Head of caudate nucleus (tissue), 42 donors: ENCODE measurements at regions of chr14 and their contacts with region 1.

Region 1: DNA sequence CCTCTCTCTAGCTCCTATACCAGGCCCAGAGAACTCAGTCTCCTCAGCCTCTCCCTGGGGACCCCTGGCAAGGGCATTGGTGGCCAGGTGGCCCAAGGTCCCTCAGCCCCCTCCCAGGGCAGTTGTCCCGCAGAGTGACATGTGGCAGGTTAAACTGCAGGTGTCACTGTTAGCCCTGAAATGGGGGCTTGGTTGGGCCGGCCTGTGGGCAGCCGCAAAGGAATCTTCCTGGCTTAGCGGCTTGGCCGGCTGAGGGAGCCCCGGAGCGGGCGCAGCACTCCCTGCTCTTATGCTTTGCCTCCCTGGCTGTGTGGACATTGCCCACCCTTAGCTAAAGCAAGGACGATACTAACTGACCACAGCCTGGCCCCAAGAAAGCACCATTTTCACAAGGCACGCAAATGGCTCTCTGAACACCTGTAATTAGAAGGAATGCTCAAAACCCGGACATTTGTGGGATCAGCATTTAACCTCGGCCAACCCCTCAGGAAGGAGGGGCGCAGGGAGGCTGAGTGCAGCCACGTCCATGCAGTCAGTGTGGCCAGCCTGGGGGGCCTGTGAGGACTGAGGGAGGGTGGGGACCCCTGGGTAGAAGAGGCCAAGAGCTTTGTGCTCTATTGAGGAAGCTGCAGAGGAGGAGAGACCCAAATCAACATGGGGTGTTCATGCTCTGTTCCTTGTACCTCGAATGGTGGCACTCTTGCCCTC is 82.2 kb downstream of the PAPOLA start:
- DNase-seq: peak in 16 of 42 donors; percentile 19 to 57 (median 37)

Region 2: DNA sequence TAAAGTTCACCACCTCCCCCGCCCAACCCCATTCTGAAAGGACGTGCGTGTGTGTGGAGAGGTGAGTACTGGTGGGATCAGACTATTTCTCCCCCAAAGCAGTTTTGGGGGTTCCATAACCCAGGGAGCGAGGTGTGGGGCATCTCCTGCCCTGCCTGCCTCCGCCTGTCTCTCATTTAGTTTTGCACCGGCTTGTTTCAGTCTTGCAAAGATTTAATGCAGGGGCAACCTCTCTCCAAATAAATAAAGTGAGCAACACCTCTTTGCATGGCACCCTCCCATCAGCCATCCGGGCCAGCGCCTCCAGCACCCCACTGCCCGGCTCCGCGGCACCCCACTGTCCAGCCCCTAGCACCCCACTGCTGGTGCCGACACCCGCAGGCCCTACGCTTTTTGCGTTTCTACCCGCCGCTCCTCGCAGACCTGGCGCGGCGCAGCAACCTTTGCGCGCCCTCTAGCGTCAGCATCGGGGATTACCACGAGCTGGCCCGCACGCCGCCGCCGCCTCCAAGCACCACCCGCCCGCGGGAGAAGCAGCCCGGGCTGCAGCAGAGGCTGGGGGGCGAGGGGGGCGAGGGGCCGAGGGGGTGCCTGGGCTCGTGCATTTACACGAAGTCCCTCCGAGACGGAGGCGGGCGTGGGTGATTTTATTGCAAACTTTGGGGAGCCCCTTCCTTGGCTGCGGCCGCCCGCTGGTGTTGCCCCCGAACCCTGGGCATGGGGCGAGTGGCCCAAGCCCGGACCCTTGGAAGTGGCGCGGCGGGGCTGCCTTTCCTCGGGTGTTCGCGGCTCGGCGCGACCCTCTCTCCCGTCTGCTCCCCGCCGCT is 157.0 kb after region 1 on chr14:
- intact Hi-C with region 1: loop called (anchors 10 kb)
- DNase-seq: peak; percentile 44 to 89 (median 74)